CD4-positive, alpha-beta T cell (primary cell): ENCODE measurements at regions of chr7 and their contacts with region 1.

Region 1: GRCh38 chr7:74561898-74562613 is 95.5 kb upstream of the GTF2I start:
- DNase-seq: no peak
- ATAC-seq: no peak
- H3K4me3 ChIP-seq: no peak overlapping the region
- H3K4me3 Mint-ChIP-seq: no peak overlapping the region
- H3K27ac ChIP-seq: no peak overlapping the region
- H3K27ac Mint-ChIP-seq: no peak overlapping the region
- H3K4me1 ChIP-seq: peaks cover 2% of the 10 kb centered on the region
- H3K4me1 Mint-ChIP-seq: no peaks in the 10 kb centered on the region
- H3K27me3 ChIP-seq: no peaks in the 10 kb centered on the region
- H3K27me3 Mint-ChIP-seq: no peaks in the 10 kb centered on the region
- CTCF ChIP-seq: no peak

Region 2: GRCh38 chr7:73667344-73668102 is 894.5 kb before region 1 on chr7 and contains the start of gene VPS37D:
- CTCF ChIA-PET with region 1: no interaction called
- POLR2A ChIA-PET with region 1: no interaction called
- intact Hi-C with region 1: no loop called
- DNase-seq: peak; percentile 85 to 97 (median 94)
- ATAC-seq: peak; percentile 91
- H3K4me3 ChIP-seq: peak within 1 kb of the TSS; percentile 51
- H3K4me3 Mint-ChIP-seq: peak within 1 kb of the TSS; percentile 82
- H3K27ac ChIP-seq: no peak within 1 kb of the TSS
- H3K27ac Mint-ChIP-seq: no peak within 1 kb of the TSS
- H3K4me1 ChIP-seq: peaks cover 14% of the 10 kb centered on the region
- H3K4me1 Mint-ChIP-seq: peaks cover 5% of the 10 kb centered on the region
- H3K27me3 ChIP-seq: peaks cover 13 to 30% of the 10 kb centered on the region in 2 experiments
- H3K27me3 Mint-ChIP-seq: peaks cover 40% of the 10 kb centered on the region
- CTCF ChIP-seq: peak; percentile 52
- total RNA-seq, gene VPS37D: 0.81 to 0.96 TPM

Region 3: GRCh38 chr7:74464943-74465886 is 96.8 kb before region 1 on chr7:
- CTCF ChIA-PET with region 1: no interaction called
- POLR2A ChIA-PET with region 1: no interaction called
- intact Hi-C with region 1: loop called in 1 of 2 experiments (anchors 5 kb)
- DNase-seq: peak in 1 of 14 experiments; percentile 32
- ATAC-seq: peak; percentile 17
- H3K4me3 ChIP-seq: no peak overlapping the region
- H3K4me3 Mint-ChIP-seq: no peak overlapping the region
- H3K27ac ChIP-seq: no peak overlapping the region
- H3K27ac Mint-ChIP-seq: no peak overlapping the region
- H3K4me1 ChIP-seq: peaks cover 13% of the 10 kb centered on the region
- H3K4me1 Mint-ChIP-seq: peaks cover 6% of the 10 kb centered on the region
- H3K27me3 ChIP-seq: no peaks in the 10 kb centered on the region
- H3K27me3 Mint-ChIP-seq: no peaks in the 10 kb centered on the region
- CTCF ChIP-seq: no peak